H1 (cell line): ENCODE measurements at regions of chr3 and their contacts with region 1.

Region 1: GRCh38 chr3:15268033-15268631 is 62.1 kb downstream of the CAPN7 start:
- DNase-seq: peak; percentile 53 to 87
- H3K4me3 ChIP-seq: no peak overlapping the region
- H3K27ac ChIP-seq: no peak overlapping the region
- H3K4me1 ChIP-seq: no peaks in the 10 kb centered on the region; a peak in 1 of 7 replicates
- H3K27me3 ChIP-seq: no peaks in the 10 kb centered on the region
- CTCF ChIP-seq: peak; percentile 94 to 98 (median 96)
- EP300 ChIP-seq: no peak
- POLR2A ChIP-seq: no peak
- RAD21 ChIP-seq: peak; percentile 98 to 99

Region 2: DNA sequence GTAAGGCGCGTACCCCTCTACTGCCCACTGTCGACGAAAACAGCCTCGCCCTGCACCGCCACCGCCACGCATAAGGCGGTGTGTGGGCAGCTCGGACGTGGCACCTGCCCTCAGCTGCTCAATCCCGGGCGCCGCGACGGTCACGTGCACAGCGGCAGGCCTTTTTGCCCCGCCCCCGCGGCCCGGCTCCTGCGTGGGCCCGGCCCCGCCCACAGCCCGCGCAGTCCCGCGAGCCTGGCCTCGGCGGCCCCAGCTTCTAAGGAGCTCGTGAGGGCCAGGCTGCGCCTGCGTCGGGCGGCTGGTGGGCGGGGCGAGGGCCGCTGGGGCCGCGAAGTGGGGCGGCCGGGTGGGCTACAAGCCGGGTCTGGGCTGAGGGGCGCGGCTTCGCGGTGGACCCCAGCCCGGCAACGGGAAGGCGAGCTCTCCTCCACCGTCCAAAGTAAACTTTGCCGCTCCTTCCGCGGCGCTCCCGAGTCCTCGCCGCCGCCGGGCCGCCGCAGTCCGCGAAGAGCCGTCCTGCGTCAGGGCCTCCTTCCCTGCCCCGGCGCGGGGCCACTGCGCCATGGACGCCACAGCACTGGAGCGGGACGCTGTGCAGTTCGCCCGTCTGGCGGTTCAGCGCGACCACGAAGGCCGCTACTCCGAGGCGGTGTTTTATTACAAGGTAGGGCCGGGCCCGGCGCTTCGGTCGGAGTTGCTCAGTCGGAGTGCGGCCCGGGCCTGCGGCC is 62.0 kb before region 1 on chr3 and contains the start of gene CAPN7:
- CTCF ChIA-PET with region 1: interaction called, 40 read pairs
- POLR2A ChIA-PET with region 1: no interaction called
- DNase-seq: peak; percentile 23 to 86
- H3K4me3 ChIP-seq: peak within 1 kb of the TSS; percentile 83 to 92 (median 86)
- H3K27ac ChIP-seq: peak within 1 kb of the TSS; percentile 73; the same call in 1 of the 2 replicates
- H3K4me1 ChIP-seq: peaks cover 0 to 3% (median 1%) of the 10 kb centered on the region in 4 experiments; a peak in 3 of 7 replicates
- H3K27me3 ChIP-seq: no peaks in the 10 kb centered on the region; a peak in 2 of 7 replicates
- CTCF ChIP-seq: peak; percentile 31 to 69 (median 57)
- EP300 ChIP-seq: no peak
- POLR2A ChIP-seq: peak in 1 of 2 experiments; percentile 67; a peak in 2 of 3 replicates
- RAD21 ChIP-seq: peak; percentile 14 to 30; a peak in 1 of 4 replicates
- total RNA-seq, gene CAPN7: 13.0 and 13.2 TPM in 2 replicates

Region 3: DNA sequence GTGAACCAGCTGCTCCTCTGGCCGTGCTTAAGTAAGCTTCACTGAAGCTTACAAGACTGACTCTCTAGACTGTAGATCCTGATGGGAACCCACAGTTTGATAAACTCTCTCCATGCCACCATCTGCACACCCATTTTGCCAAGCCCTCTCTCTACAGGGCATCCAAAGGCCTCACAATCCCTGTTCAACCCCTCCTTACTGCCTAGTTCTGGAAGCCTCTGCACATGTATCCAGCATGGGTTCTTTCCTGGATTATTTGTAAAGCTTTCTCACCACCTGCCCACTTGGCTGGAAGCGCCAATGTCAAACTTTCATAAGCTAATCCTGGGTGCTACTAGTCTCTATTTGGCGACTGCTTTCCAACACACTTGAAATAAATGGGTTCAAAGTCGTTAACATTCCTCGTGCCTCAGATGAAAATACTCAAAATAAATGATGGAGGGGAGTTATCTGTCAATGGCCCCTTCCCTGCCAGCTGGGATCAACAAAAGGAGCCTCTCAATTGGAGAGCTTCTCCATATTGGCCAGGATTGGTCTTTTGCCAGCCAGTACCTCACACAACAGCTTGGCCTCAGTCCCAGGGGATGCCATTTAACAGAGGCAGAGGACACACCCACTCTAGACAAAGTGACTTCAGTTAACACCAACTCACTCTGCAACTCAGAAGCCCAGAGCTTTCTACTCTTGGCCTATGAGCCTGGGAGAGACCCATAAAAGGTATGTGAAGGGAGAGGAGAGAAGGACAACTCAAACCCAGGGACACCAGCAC is 16.2 kb after region 1 on chr3:
- CTCF ChIA-PET with region 1: interaction called, 180 read pairs
- POLR2A ChIA-PET with region 1: interaction called, 4 read pairs
- DNase-seq: no peak
- H3K4me3 ChIP-seq: no peak overlapping the region
- H3K27ac ChIP-seq: no peak overlapping the region
- H3K4me1 ChIP-seq: peaks cover 0 to 8% (median 3%) of the 10 kb centered on the region in 4 experiments; a peak in 4 of 7 replicates
- H3K27me3 ChIP-seq: no peaks in the 10 kb centered on the region
- CTCF ChIP-seq: no peak
- EP300 ChIP-seq: no peak
- POLR2A ChIP-seq: no peak
- RAD21 ChIP-seq: no peak

Region 4: DNA sequence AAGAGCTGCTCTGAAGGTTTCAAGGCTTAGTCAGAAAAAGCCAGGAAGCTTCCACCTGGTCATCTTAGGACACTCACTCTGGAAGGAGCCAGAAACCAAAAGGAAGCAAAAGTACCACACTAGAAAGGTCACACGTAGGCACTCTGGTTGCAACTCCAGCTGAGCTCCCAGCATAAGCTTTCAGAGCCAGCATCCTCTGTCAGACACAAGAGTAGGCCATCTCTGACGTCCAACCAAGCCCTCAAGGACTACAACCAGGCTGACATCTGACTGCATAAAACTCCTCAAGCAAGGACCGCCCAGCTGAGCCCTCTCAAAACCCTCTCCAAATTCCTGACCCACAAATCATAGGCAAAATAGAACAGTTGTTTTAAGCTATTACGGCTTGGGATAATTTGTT is 51.4 kb after region 1 on chr3:
- CTCF ChIA-PET with region 1: interaction called, 21 read pairs
- POLR2A ChIA-PET with region 1: no interaction called
- DNase-seq: no peak
- H3K4me3 ChIP-seq: no peak overlapping the region
- H3K27ac ChIP-seq: no peak overlapping the region
- H3K4me1 ChIP-seq: peaks cover 0 to 2% (median under 1%) of the 10 kb centered on the region in 4 experiments; a peak in 1 of 7 replicates
- H3K27me3 ChIP-seq: no peaks in the 10 kb centered on the region
- CTCF ChIP-seq: no peak
- EP300 ChIP-seq: no peak
- POLR2A ChIP-seq: no peak
- RAD21 ChIP-seq: no peak

Region 5: DNA sequence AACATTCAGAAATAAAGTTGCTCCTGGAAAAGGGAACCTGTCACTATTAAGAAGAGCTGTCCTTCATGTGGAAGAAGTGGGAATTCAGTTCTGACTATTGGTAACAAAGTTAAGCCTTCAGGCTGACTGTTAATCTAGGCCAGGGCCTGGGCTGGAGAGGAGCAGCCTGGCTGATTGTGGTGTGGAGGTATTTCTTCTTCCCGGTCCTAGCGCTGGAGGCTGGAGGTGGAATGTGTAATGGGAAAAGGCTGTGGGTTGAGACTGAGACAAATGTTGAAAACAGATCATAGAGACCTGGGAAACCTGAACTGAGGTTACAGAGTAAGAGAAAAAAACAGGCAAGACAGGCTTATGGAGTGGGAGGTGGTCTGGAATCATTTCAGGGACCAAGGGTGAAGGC is 88.1 kb after region 1 on chr3:
- CTCF ChIA-PET with region 1: interaction called, 24 read pairs
- POLR2A ChIA-PET with region 1: no interaction called
- DNase-seq: no peak
- H3K4me3 ChIP-seq: no peak overlapping the region
- H3K27ac ChIP-seq: 0 out of 2 replicates have a peak overlapping the region, but pooled peaks have one; percentile 53
- H3K4me1 ChIP-seq: peaks cover 0 to 6% (median 1%) of the 10 kb centered on the region in 4 experiments; a peak in 3 of 7 replicates
- H3K27me3 ChIP-seq: peaks cover 0 to 1% (median 0%) of the 10 kb centered on the region in 4 experiments; a peak in 1 of 7 replicates
- CTCF ChIP-seq: no peak
- EP300 ChIP-seq: no peak
- POLR2A ChIP-seq: no peak
- RAD21 ChIP-seq: no peak

Region 6: GRCh38 chr3:15384510-15385237 is 116.5 kb after region 1 on chr3:
- CTCF ChIA-PET with region 1: interaction called, 50 read pairs
- POLR2A ChIA-PET with region 1: no interaction called
- DNase-seq: no peak
- H3K4me3 ChIP-seq: no peak overlapping the region
- H3K27ac ChIP-seq: no peak overlapping the region
- H3K4me1 ChIP-seq: no peaks in the 10 kb centered on the region
- H3K27me3 ChIP-seq: no peaks in the 10 kb centered on the region
- CTCF ChIP-seq: no peak
- EP300 ChIP-seq: no peak
- POLR2A ChIP-seq: no peak
- RAD21 ChIP-seq: no peak

Region 7: DNA sequence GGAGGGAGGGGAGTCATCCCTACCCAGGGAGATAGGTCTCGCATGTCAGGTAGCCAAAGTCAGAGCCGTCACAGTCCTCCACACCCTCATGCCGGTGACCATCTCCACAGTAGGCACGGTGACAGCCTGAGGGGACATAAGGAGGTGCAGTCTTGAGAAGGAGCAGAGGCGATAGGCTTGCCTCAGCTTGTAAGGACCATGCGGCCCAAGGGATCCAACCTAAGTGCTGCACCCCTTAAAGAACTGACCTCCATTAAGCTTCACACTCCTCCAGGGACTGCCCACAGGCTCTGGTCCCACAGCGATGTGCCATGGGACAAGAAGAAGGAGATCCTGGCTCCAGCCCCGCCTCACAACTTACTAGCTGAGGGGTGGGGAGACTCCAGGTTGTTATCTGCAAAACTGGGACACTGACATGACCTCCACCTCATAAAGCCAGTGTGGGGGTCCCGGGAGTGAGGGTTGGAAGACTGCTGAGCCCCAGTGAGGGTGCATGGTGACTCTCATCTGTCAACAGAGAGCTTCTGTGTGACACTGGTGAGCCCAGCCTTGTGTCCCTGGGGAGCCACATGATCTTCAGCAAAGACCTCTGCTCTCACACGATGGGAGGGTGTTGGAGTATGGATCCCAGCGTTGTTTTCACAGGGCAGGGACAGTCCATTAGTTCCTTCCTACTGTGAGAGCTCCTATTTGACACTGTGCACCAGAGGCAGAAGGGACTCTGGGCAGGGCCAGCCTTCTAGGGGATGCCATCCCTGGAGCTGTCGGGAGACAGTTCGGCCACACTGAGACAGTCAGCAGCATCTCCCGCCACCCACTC is 185.9 kb after region 1 on chr3:
- CTCF ChIA-PET with region 1: no interaction called
- POLR2A ChIA-PET with region 1: no interaction called
- DNase-seq: no peak
- H3K4me3 ChIP-seq: no peak overlapping the region
- H3K27ac ChIP-seq: no peak overlapping the region
- H3K4me1 ChIP-seq: no peaks in the 10 kb centered on the region
- H3K27me3 ChIP-seq: no peaks in the 10 kb centered on the region
- CTCF ChIP-seq: no peak
- EP300 ChIP-seq: no peak
- POLR2A ChIP-seq: no peak
- RAD21 ChIP-seq: no peak

Region 8: GRCh38 chr3:15601397-15602145 is 333.4 kb after region 1 on chr3 and contains the starts of genes BTD and HACL1:
- CTCF ChIA-PET with region 1: no interaction called
- POLR2A ChIA-PET with region 1: no interaction called
- DNase-seq: peak; percentile 97 to 99
- H3K4me3 ChIP-seq: peak within 1 kb of the TSS; percentile 84 to 99 (median 89)
- H3K27ac ChIP-seq: peak within 1 kb of the TSS; percentile 90
- H3K4me1 ChIP-seq: peaks cover 0 to 6% (median 0%) of the 10 kb centered on the region in 4 experiments; a peak in 2 of 7 replicates
- H3K27me3 ChIP-seq: no peaks in the 10 kb centered on the region
- CTCF ChIP-seq: peak; percentile 3 to 45 (median 34); a peak in 3 of 4 replicates
- EP300 ChIP-seq: no peak
- POLR2A ChIP-seq: peak; percentile 88 to 97
- RAD21 ChIP-seq: no peak
- total RNA-seq, gene BTD: 21.8 and 22.0 TPM in 2 replicates
- total RNA-seq, gene HACL1: 45.7 and 46.0 TPM in 2 replicates